GM23248 (cell line): ENCODE measurements at regions of chr16 and their contacts with region 1.

Region 1: GRCh38 chr16:70770626-70771552 is 30.1 kb downstream of the VAC14 start:
- DNase-seq: peak; percentile 66
- H3K4me3 ChIP-seq: no peak overlapping the region
- H3K27ac ChIP-seq: no peak overlapping the region
- H3K4me1 ChIP-seq: peaks cover 24% of the 10 kb centered on the region
- H3K27me3 ChIP-seq: no peaks in the 10 kb centered on the region

Region 2: DNA sequence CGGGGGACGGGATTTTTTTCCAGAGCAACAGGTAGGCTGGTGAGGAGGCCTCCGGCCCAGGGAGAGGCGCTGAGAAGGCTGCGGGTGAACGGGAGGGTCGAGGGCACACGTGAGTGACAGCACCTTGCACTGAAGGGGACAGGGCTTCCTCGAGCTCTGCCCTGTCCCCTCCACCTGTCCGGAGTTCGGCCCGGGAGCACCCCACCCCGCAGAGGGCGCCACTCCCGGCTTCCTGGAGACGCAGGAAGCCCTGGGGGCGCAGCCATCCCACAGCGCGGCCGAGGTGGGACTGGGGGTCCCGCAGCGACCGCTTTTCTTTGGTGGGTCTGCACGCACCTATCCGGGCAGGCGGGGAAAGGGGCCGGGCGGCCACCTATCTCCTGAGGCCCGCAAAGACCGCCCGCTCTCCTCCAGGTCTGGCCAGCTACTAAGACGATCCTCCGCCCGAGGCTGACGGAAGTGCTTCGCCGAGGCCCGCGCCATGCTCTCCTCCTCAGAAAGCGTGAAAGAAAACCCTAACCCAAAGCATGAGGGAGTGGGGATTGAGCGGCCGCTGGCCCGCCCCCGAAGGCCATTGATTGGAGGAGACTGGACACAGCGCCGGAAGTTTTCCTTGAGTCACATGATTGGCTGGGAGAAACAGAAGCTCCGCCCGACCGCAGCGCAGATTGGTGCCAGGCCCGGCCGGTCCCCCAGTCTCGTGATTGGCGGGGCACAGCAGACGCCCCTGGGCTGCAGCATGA is 389.9 kb before region 1 on chr16:
- in situ Hi-C with region 1: loop called (anchors 25 kb)
- DNase-seq: peak; percentile 99
- H3K4me3 ChIP-seq: peak overlapping the region; percentile 92
- H3K27ac ChIP-seq: peak overlapping the region; percentile 78
- H3K4me1 ChIP-seq: peaks cover 8% of the 10 kb centered on the region; the same call in 1 of the 2 replicates
- H3K27me3 ChIP-seq: no peaks in the 10 kb centered on the region

Region 3: DNA sequence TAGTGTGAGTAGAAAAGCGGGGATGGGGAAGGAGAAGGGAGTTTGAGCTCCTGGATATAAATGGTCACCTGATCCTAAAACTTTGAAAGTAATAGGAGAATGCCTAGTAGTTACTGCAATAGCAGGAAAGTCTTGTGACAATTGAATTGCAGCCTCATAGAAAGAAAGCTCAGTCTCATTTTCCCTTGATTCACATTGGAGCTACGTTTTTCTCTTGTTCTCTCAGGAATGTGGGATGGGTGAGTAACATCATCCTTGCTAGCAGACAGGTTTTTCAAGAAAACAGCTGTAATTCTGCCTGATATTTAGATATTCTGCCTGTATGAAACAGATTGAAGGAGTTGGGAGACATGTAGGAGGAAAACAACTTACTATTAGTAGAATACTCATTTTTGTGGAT is 222.0 kb before region 1 on chr16:
- in situ Hi-C with region 1: loop called (anchors 10 kb)
- DNase-seq: no peak
- H3K4me3 ChIP-seq: no peak overlapping the region
- H3K27ac ChIP-seq: peak overlapping the region; percentile 25; the same call in 1 of the 2 replicates
- H3K4me1 ChIP-seq: peaks cover 24% of the 10 kb centered on the region
- H3K27me3 ChIP-seq: no peaks in the 10 kb centered on the region

Region 4: DNA sequence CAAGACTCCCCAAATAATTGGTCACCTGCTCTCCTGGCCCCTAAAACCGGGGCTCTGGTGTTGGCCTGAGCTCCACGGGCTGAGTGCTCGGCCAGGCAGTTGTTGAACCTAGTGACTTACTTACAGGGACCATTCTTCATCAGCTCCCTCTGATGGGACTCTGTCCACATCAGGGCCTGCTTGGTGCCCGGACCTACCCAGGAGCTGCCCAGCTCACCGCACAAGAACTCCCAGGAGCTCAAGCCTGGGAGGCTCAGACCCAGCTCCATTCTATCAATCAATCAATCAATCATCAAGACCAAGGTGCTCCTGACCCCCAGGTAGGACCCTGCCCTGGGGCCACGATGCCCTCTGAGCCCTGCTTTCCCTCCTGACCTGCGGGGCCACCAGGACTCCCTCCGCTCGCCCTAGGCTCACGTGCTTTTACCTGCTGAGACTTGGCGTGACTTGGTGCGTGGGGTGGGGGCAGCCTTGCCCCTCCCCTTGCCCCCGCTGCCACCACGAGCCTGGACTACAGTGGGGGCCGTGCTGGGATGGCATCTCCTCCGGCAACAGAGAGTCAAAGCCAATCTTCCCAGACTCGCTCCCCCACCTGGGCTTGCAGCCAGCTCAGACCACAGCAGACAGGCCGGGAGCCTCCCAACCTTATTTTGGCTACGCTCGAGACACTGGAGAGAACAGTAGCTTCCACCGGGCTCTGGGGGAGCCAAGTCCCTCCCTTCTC is 108.8 kb before region 1 on chr16:
- in situ Hi-C with region 1: no loop called
- DNase-seq: no peak
- H3K4me3 ChIP-seq: no peak overlapping the region
- H3K27ac ChIP-seq: no peak overlapping the region
- H3K4me1 ChIP-seq: no peaks in the 10 kb centered on the region
- H3K27me3 ChIP-seq: no peaks in the 10 kb centered on the region

Region 5: GRCh38 chr16:71894921-71895678 is 1124.2 kb after region 1 on chr16 and contains the start of gene IST1:
- in situ Hi-C with region 1: no loop called
- DNase-seq: peak; percentile 100
- H3K4me3 ChIP-seq: peak within 1 kb of the TSS; percentile 90
- H3K27ac ChIP-seq: peak within 1 kb of the TSS; percentile 91
- H3K4me1 ChIP-seq: peaks cover 8% of the 10 kb centered on the region; the same call in 1 of the 2 replicates
- H3K27me3 ChIP-seq: no peaks in the 10 kb centered on the region
- total RNA-seq, gene IST1: 149 and 175 TPM in 2 replicates